ENCODE measurements at regions of chr19 and their contacts with region 1.

Region 1: GRCh38 chr19:13952154-13953035 is at the start of gene DCAF15:
- DNase-seq: peak; percentile 100
- H3K4me3 Mint-ChIP-seq: peak within 1 kb of the TSS; percentile 96
- H3K27ac Mint-ChIP-seq: peak within 1 kb of the TSS; percentile 84
- H3K4me1 Mint-ChIP-seq: peaks cover 17% of the 10 kb centered on the region
- H3K27me3 Mint-ChIP-seq: no peaks in the 10 kb centered on the region
- total RNA-seq, gene DCAF15: 67.7 to 70.6 TPM

Region 2: GRCh38 chr19:13731147-13731964 is 221.0 kb before region 1 on chr19:
- CTCF ChIA-PET with region 1: no interaction called
- intact Hi-C with region 1: loop called (anchors 2 kb)
- DNase-seq: peak; percentile 95
- H3K4me3 Mint-ChIP-seq: peak overlapping the region; percentile 84
- H3K27ac Mint-ChIP-seq: peak overlapping the region; percentile 94
- H3K4me1 Mint-ChIP-seq: peaks cover 23% of the 10 kb centered on the region
- H3K27me3 Mint-ChIP-seq: no peaks in the 10 kb centered on the region

Region 3: GRCh38 chr19:13905938-13906904 is 46.2 kb before region 1 on chr19 and contains the starts of genes BRME1 and CC2D1A:
- CTCF ChIA-PET with region 1: no interaction called
- intact Hi-C with region 1: loop called (anchors 1 kb)
- DNase-seq: peak; percentile 97
- H3K4me3 Mint-ChIP-seq: peak within 1 kb of the TSS; percentile 86
- H3K27ac Mint-ChIP-seq: peak within 1 kb of the TSS; percentile 88
- H3K4me1 Mint-ChIP-seq: peaks cover 30% of the 10 kb centered on the region
- H3K27me3 Mint-ChIP-seq: no peaks in the 10 kb centered on the region
- total RNA-seq, gene BRME1: 5.8 to 5.9 TPM
- total RNA-seq, gene CC2D1A: 27.4 to 28.6 TPM

Region 4: GRCh38 chr19:13935765-13936510 is 16.5 kb before region 1 on chr19:
- CTCF ChIA-PET with region 1: no interaction called
- intact Hi-C with region 1: no loop called
- DNase-seq: no peak
- H3K4me3 Mint-ChIP-seq: no peak overlapping the region
- H3K27ac Mint-ChIP-seq: no peak overlapping the region
- H3K4me1 Mint-ChIP-seq: no peaks in the 10 kb centered on the region
- H3K27me3 Mint-ChIP-seq: peaks cover 2% of the 10 kb centered on the region

Region 5: GRCh38 chr19:14006243-14006765 is 53.9 kb after region 1 on chr19 and contains the start of gene RFX1:
- CTCF ChIA-PET with region 1: interaction called, 3 read pairs
- intact Hi-C with region 1: loop called (anchors 1 kb)
- DNase-seq: peak; percentile 100
- H3K4me3 Mint-ChIP-seq: peak within 1 kb of the TSS; percentile 90
- H3K27ac Mint-ChIP-seq: peak within 1 kb of the TSS; percentile 96
- H3K4me1 Mint-ChIP-seq: peaks cover 39% of the 10 kb centered on the region
- H3K27me3 Mint-ChIP-seq: no peaks in the 10 kb centered on the region
- total RNA-seq, gene RFX1: 13.8 to 14.0 TPM

Region 6: DNA sequence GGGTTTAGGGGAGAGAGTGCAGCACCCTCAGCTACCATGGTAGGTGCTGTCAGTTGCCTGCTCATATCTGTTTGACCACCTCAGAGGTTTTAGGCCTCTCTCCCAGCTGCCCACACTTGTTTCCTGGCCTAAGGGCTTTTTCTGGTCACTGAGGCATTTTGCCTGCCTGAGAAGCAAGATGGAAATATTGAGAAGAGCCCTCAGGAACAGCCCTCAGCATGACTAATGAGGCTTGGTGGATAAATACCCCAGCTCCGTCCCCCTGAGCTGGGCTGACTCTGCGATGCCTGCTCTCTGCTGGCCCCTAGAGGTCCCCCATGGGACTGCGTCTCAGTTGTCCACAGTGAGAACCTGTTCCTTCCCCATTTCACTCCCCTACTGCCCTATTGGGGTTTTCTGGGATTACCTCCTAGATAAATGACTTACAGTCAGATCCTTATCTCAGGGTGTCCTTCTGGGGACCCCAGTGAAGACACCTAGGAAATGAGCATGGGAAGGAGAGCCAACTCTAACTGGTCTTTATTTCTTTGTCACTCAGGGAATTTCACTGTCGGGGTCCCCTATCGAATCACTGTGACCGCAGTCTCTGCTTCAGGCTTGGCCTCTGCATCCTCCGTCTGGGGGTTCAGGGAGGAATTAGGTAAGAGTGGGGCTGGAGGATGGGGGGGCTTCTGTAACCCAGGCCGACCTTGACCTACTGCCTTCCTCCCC is 96.2 kb after region 1 on chr19:
- CTCF ChIA-PET with region 1: interaction called, 7 read pairs
- intact Hi-C with region 1: loop called (anchors 5 kb)
- DNase-seq: peak; percentile 81
- H3K4me3 Mint-ChIP-seq: no peak overlapping the region
- H3K27ac Mint-ChIP-seq: peak overlapping the region; percentile 30
- H3K4me1 Mint-ChIP-seq: no peaks in the 10 kb centered on the region
- H3K27me3 Mint-ChIP-seq: no peaks in the 10 kb centered on the region

Region 7: GRCh38 chr19:14081325-14082093 is 129.1 kb after region 1 on chr19:
- CTCF ChIA-PET with region 1: no interaction called
- intact Hi-C with region 1: loop called (anchors 1 kb)
- DNase-seq: peak; percentile 100
- H3K4me3 Mint-ChIP-seq: peak overlapping the region; percentile 95
- H3K27ac Mint-ChIP-seq: peak overlapping the region; percentile 91
- H3K4me1 Mint-ChIP-seq: peaks cover 11% of the 10 kb centered on the region
- H3K27me3 Mint-ChIP-seq: no peaks in the 10 kb centered on the region